A673 (cell line): ENCODE measurements at regions of chrX and their contacts with region 1.

Region 1: DNA sequence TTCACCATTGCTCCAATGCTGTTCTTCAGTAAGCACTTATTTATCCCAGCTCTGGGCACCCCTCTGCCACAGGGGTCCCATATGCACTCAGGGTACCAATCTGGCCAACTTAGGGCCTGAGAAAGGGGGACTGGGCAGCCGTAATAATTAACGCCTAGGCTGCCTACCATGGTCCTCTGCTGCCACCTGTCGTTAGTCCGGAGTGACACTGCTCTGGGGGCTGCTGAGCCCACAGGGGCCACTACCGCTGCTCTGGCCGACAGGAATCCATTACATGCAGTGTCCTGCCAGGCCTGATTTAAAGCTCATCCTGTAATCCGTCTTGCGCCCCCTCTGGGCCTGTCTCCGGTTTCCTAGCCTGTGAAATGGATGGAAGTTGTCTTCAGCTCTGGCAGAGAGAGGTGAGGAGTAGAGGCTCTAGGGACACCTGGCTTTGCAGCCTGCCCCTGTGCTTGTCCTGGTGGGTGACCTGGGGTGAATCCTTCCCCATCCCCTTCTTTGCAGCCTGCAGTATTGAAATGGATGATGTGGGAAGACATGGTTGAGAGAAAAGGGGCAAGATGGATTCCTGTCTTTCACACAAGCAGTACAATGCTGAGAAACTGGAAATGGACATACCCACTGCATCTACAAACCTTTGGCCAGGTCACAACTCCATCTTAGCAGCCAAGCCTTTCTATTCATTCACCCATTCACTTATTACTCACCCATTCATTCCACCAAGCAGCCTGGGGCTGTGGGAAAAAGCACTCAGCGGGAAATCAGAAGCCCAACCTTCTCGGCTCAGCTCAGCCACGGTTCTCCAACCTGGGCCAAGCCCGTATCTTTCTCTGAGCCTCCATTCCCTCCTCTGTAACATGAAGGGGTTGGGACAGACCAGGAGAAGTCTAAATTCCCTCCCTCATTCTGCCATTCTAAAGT is 116.3 kb upstream of the NALF2 start:
- DNase-seq: peak; percentile 84
- H3K4me3 ChIP-seq: no peak overlapping the region
- H3K27ac ChIP-seq: peak overlapping the region; percentile 86
- H3K4me1 ChIP-seq: peaks cover 52% of the 10 kb centered on the region
- H3K27me3 ChIP-seq: no peaks in the 10 kb centered on the region
- CTCF ChIP-seq: peak; percentile 94

Region 2: GRCh38 chrX:68732906-68733493 is 654.8 kb before region 1 on chrX:
- CTCF ChIA-PET with region 1: interaction called, 3 read pairs
- POLR2A ChIA-PET with region 1: no interaction called
- intact Hi-C with region 1: loop called (anchors 2 kb)
- DNase-seq: peak; percentile 79
- H3K4me3 ChIP-seq: no peak overlapping the region
- H3K27ac ChIP-seq: no peak overlapping the region
- H3K4me1 ChIP-seq: no peaks in the 10 kb centered on the region
- H3K27me3 ChIP-seq: no peaks in the 10 kb centered on the region
- CTCF ChIP-seq: peak; percentile 79

Region 3: DNA sequence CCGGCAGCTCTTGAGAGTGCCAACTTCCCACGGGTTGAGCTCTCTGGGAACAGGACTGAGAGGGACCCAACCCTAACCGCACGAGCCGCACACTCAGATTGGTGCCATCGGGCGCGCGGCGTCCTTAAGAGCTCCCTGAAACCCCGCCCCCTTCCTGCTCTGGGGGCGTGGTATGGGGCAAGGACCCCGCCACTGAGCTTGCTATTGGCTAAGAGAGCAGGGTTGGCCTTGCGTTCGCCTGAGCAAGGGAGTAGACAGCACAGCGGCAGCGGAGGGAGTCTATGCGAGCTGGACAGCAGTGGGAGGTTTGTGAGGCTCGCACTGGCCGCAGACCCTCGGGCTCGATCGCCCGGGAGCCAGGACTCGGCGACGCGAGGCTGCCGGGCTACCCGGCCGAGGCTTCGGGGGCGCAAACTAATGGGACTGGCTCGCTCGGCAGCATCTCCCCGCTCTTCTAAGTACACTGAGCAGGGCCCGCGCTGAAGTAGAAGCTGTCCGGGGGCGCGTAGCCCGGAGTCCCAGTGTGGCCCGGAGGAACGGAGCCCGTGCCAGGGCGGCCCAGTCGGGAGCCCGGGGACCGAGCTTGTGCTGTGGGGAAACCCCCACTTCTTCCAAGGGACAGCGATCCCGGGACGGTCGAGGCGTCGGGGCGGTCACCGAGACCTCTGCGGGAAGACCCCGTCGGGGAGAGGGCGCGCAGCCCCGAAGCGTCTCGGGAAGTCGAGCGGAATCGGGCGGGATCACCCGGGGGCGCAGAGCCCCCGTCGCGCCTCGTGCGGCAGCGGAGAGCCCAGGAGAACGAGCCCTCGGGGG is 558.9 kb before region 1 on chrX and contains the start of gene EFNB1:
- CTCF ChIA-PET with region 1: interaction called, 47 read pairs
- POLR2A ChIA-PET with region 1: no interaction called
- intact Hi-C with region 1: loop called (anchors 1 kb)
- DNase-seq: peak; percentile 95
- H3K4me3 ChIP-seq: peak within 1 kb of the TSS; percentile 82
- H3K27ac ChIP-seq: peak within 1 kb of the TSS; percentile 84
- H3K4me1 ChIP-seq: no peaks in the 10 kb centered on the region
- H3K27me3 ChIP-seq: no peaks in the 10 kb centered on the region
- CTCF ChIP-seq: no peak
- total RNA-seq, gene EFNB1: 76.8 and 78.1 TPM in 2 replicates

Region 4: GRCh38 chrX:69137371-69138117 is 250.3 kb before region 1 on chrX:
- CTCF ChIA-PET with region 1: no interaction called
- POLR2A ChIA-PET with region 1: no interaction called
- intact Hi-C with region 1: loop called (anchors 5 kb)
- DNase-seq: no peak
- H3K4me3 ChIP-seq: no peak overlapping the region
- H3K27ac ChIP-seq: no peak overlapping the region
- H3K4me1 ChIP-seq: no peaks in the 10 kb centered on the region
- H3K27me3 ChIP-seq: no peaks in the 10 kb centered on the region
- CTCF ChIP-seq: no peak

Region 5: GRCh38 chrX:69222103-69223090 is 165.4 kb before region 1 on chrX:
- CTCF ChIA-PET with region 1: interaction called, 4 read pairs
- POLR2A ChIA-PET with region 1: no interaction called
- intact Hi-C with region 1: loop called (anchors 2 kb)
- DNase-seq: peak; percentile 90
- H3K4me3 ChIP-seq: no peak overlapping the region
- H3K27ac ChIP-seq: peak overlapping the region; percentile 22
- H3K4me1 ChIP-seq: peaks cover 18% of the 10 kb centered on the region
- H3K27me3 ChIP-seq: no peaks in the 10 kb centered on the region
- CTCF ChIP-seq: peak; percentile 87

Region 6: DNA sequence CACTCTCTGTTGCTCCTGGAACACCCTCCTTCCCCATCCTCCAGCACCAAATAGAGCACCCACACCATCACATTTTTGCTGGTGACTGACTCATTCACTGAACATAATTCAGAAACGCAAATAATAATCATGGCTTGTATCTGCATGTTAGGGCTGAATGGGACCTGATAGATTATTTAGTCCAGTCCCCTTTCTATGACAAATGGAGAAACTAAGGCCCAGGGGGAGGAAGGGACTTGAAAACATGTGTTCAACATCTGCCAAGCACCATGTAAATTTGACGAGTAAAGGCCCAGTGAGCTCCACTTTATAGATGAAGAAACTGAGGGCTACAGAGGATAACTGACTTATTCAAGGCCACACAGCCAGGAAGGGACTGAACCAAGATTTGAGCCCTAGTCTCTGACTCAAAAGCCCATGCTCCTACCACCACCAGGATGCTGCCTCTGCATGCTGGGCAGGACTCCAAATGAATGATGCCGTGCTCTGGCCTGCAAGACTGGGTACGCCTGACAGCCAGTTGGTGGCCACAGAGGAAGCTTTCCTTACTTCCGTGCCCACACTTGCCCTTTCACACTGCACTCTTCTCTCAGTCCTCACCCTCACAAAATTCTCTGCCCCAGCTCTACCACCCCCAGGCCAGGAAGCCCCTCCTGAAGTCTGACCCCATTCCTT is 89.2 kb before region 1 on chrX:
- CTCF ChIA-PET with region 1: interaction called, 12 read pairs
- POLR2A ChIA-PET with region 1: no interaction called
- intact Hi-C with region 1: loop called (anchors 2 kb)
- DNase-seq: peak; percentile 67
- H3K4me3 ChIP-seq: no peak overlapping the region
- H3K27ac ChIP-seq: peak overlapping the region; percentile 65
- H3K4me1 ChIP-seq: peaks cover 48% of the 10 kb centered on the region
- H3K27me3 ChIP-seq: no peaks in the 10 kb centered on the region
- CTCF ChIP-seq: no peak